Testis (tissue), 5 donors: ENCODE measurements at regions of chr16 and their contacts with region 1.

Region 1: GRCh38 chr16:51971184-51971583 is 575.8 kb downstream of the TOX3 start:
- DNase-seq: peak; percentile 31
- H3K4me3 ChIP-seq: no peak overlapping the region
- H3K27ac ChIP-seq: no peak overlapping the region
- H3K4me1 ChIP-seq: no peaks in the 10 kb centered on the region
- H3K27me3 ChIP-seq: no peaks in the 10 kb centered on the region
- CTCF ChIP-seq: peak in 1 of 3 experiments; percentile 31
- POLR2A ChIP-seq: no peak

Region 2: GRCh38 chr16:51408357-51408756 is 562.8 kb before region 1 on chr16:
- intact Hi-C with region 1: loop called (anchors 10 kb)
- DNase-seq: no peak
- H3K4me3 ChIP-seq: no peak overlapping the region
- H3K27ac ChIP-seq: no peak overlapping the region
- H3K4me1 ChIP-seq: no peaks in the 10 kb centered on the region
- H3K27me3 ChIP-seq: no peaks in the 10 kb centered on the region
- CTCF ChIP-seq: no peak
- POLR2A ChIP-seq: no peak

Region 3: DNA sequence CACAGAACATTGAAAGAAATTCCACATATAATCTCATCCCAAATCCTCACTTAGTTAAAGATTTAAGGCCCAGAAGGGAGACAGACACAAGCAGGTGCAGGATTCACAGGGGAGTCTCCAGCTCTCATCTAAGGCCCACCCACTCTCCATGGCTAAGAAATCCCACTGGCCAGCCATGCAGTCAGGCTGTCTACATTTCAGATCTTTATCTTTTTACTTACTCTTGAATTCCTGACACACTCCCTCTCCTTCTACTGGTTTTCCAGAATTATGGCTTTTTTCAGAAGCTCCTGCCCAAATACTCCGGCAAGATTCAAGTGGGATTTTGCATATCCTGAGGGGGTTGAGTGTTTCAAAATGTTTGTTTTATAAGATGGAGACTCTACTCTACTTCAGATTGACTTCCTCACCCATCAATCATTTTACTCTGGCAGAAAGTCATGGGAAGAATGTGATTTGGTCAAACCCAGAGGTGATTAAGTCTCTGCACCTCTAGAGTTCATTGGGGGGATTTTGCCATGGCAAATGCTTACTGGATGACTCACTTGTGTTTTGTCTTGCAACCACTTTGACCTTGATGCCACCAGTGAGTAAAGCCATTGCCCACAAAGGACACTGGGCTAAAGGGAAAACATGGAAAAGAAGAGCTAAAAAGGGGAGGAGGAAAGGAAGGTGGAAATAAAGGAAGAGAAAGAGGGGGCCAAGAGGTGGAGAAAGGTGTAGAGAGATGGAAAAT is 131.3 kb before region 1 on chr16:
- intact Hi-C with region 1: no loop called
- DNase-seq: no peak
- H3K4me3 ChIP-seq: no peak overlapping the region
- H3K27ac ChIP-seq: no peak overlapping the region
- H3K4me1 ChIP-seq: no peaks in the 10 kb centered on the region
- H3K27me3 ChIP-seq: no peaks in the 10 kb centered on the region
- CTCF ChIP-seq: no peak
- POLR2A ChIP-seq: no peak